Sigmoid colon (tissue), 7 donors: ENCODE measurements at regions of chr16 and their contacts with region 1.

Region 1: DNA sequence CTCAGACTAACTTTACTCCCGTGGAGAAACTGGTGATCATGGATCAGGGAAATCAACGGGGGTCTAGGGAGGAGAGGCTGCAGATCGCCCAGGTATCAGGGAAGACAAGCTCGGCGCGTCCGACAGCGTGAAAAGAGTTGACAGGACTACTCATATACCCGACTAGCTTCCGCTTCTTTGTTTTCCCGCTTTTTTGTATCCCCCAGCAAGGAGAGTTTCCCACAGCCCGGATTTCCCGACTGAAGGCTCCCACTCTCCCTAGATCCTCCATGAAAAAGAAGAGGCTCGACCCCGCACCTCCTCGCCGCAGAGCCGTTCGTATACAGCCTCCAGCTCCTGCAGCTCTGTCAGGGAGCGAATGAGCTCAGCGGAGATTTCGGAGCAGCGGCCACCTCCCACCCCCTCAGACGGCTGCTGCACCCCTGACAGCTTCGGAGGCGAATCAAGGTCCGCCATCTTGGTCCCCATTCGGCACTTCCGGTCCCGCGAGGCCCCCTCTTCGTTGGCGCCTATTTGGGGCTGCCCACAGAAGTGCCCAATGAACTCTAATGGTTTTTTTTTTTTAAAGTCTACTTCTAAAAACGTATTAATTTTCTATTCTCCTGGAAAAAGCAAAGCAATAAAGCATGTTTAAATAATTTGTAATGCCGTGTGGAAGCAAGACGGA is at the start of gene COG4:
- DNase-seq: peak; percentile 92
- H3K4me3 ChIP-seq: peak within 1 kb of the TSS; percentile 68 to 87 (median 80)
- H3K27ac ChIP-seq: peak within 1 kb of the TSS; percentile 85 to 94 (median 88)
- H3K4me1 ChIP-seq: peaks cover 0 to 48% (median 41%) of the 10 kb centered on the region in 4 donors
- H3K27me3 ChIP-seq: no peaks in the 10 kb centered on the region
- CTCF ChIP-seq: no peak
- EP300 ChIP-seq: no peak
- POLR2A ChIP-seq: no peak
- total RNA-seq, gene COG4: 25.2 to 44.3 (median 31.9) TPM

Region 2: GRCh38 chr16:70380861-70381603 is 142.2 kb before region 1 on chr16:
- intact Hi-C with region 1: loop called (anchors 2 kb)
- DNase-seq: peak; percentile 99
- H3K4me3 ChIP-seq: peak overlapping the region; percentile 45 to 72 (median 61)
- H3K27ac ChIP-seq: peak overlapping the region; percentile 73 to 92 (median 85)
- H3K4me1 ChIP-seq: peaks cover 0 to 23% (median 14%) of the 10 kb centered on the region in 4 donors
- H3K27me3 ChIP-seq: no peaks in the 10 kb centered on the region
- CTCF ChIP-seq: peak in 1 of 4 experiments; percentile 23
- EP300 ChIP-seq: no peak
- POLR2A ChIP-seq: peak in 1 of 2 donors; percentile 6

Region 3: DNA sequence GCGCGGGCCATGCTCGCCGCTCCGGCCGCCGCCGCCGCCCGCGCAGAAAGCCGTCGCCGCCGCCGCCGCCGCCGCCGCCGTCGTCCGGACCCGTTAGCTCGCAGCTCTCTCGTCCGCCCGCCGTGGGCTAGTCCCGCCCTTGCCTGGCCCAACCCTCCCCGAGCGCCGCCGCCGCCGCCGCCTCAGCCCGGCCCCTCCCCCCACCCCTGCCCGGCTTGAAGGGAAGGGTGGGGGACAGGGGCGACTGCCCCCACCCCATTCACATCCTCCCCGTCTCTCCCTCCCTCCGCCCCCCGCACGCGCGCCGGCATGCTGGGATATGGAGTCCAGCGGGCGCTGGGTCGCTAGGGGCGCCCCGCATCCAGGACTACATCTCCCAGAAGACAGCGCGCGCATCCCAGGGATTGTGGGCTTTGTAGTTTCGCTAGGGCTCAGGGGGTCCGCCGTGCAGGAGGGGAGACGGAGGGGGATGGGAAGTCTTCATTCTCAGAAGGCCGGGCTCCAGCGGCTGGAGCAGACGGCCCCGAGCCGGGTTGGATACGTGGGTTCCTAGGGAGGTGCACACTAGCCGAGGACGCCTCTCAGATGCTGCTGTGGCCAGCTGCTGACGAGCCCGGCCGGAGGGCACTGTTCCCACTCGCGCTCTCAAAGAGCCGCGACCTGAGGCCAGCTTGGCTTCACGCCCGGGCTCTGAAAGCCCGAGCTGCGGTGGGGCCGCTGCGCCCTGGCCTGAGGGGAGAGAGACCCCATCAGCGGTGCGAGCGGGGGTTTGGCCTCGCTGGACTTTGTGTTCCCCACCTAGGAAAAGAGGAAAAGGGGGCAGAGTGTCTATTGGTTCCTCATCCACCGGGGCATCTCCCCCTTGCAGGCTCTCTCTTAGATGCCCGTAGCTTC is 84.0 kb before region 1 on chr16 and contains the start of gene ST3GAL2:
- intact Hi-C with region 1: no loop called
- DNase-seq: peak; percentile 98
- H3K4me3 ChIP-seq: peak within 1 kb of the TSS; percentile 50 to 95 (median 85)
- H3K27ac ChIP-seq: peak within 1 kb of the TSS; percentile 75 to 87 (median 79)
- H3K4me1 ChIP-seq: peaks cover 0 to 38% (median 32%) of the 10 kb centered on the region in 4 donors
- H3K27me3 ChIP-seq: no peaks in the 10 kb centered on the region
- CTCF ChIP-seq: no peak
- EP300 ChIP-seq: no peak
- POLR2A ChIP-seq: no peak
- total RNA-seq, gene ST3GAL2: 14.0 to 21.3 (median 16.6) TPM

Region 4: DNA sequence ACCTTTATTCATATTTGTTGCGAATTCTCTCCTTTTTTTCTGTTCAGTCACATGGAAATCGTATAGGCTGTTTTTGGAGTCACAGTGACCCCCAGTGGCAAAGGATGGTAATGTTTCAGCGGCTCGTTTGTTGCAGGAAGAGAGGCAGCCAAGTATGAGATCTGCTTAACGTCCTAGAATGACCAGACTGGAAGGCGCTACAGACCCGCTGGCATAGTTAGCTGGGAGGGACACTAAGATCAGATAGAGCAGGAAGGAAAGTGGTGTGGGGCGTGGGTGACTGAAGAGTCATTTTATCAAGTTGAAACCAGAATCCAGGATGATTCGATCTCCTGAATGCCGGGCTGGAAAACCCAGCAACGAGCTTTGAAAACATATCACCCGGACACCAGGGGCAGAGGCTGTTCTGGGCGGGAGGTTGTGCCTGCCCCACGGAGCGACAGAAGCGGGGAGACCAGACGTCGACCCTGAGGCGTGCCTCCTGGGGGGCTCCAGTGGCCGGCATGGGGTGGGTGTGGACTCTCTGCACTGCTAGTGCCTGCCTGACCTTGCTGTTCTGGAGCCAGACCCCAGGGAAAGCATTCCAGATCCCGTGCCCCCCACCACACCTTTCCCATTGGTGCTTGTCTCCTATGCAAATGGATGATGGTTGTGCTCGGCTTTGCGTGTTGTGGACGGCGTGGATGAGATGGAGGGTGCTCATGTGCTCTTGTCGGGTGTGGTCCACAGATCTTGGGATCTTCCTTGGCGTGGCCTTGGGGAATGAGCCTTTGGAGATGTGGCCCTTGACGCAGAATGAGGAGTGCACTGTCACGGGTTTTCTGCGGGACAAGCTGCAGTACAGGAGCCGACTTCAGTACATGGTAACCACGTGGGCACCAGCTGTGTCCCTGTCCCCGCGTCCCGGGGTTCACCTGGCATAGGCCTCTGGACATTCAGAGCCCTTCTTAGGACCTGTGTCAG is 130.9 kb after region 1 on chr16:
- intact Hi-C with region 1: loop called (anchors 2 kb)
- DNase-seq: peak; percentile 92
- H3K4me3 ChIP-seq: peak overlapping the region in 3 of 4 donors; percentile 22 to 37 (median 26)
- H3K27ac ChIP-seq: peak overlapping the region in 3 of 4 donors; percentile 68 to 79 (median 76)
- H3K4me1 ChIP-seq: peaks cover 0 to 8% (median 6%) of the 10 kb centered on the region in 4 donors
- H3K27me3 ChIP-seq: no peaks in the 10 kb centered on the region
- CTCF ChIP-seq: peak; percentile 90 to 97 (median 96)
- EP300 ChIP-seq: no peak
- POLR2A ChIP-seq: no peak

Region 5: GRCh38 chr16:70746708-70747424 is 223.7 kb after region 1 on chr16:
- intact Hi-C with region 1: loop called (anchors 10 kb)
- DNase-seq: peak; percentile 92
- H3K4me3 ChIP-seq: no peak overlapping the region
- H3K27ac ChIP-seq: peak overlapping the region; percentile 82 to 93 (median 87)
- H3K4me1 ChIP-seq: peaks cover 0 to 71% (median 69%) of the 10 kb centered on the region in 4 donors
- H3K27me3 ChIP-seq: no peaks in the 10 kb centered on the region
- CTCF ChIP-seq: no peak
- EP300 ChIP-seq: no peak
- POLR2A ChIP-seq: no peak

Region 6: GRCh38 chr16:70770626-70771552 is 247.7 kb after region 1 on chr16:
- intact Hi-C with region 1: loop called (anchors 10 kb)
- DNase-seq: no peak
- H3K4me3 ChIP-seq: no peak overlapping the region
- H3K27ac ChIP-seq: no peak overlapping the region
- H3K4me1 ChIP-seq: peaks cover 0 to 8% (median 6%) of the 10 kb centered on the region in 4 donors
- H3K27me3 ChIP-seq: no peaks in the 10 kb centered on the region
- CTCF ChIP-seq: peak; percentile 85 to 98 (median 94)
- EP300 ChIP-seq: no peak
- POLR2A ChIP-seq: no peak